ENCODE measurements at regions of chr1 and their contacts with region 1.

Region 1: GRCh38 chr1:167789501-167789900 is 67.7 kb downstream of the MPZL1 start:
- DNase-seq: no peak
- H3K4me3 ChIP-seq: no peak overlapping the region
- H3K27ac ChIP-seq: peak overlapping the region; percentile 51 to 79 (median 74)
- H3K4me1 ChIP-seq: peaks cover 20 to 38% (median 24%) of the 10 kb centered on the region in 3 donors
- H3K27me3 ChIP-seq: no peaks in the 10 kb centered on the region
- CTCF ChIP-seq: no peak
- POLR2A ChIP-seq: no peak

Region 2: DNA sequence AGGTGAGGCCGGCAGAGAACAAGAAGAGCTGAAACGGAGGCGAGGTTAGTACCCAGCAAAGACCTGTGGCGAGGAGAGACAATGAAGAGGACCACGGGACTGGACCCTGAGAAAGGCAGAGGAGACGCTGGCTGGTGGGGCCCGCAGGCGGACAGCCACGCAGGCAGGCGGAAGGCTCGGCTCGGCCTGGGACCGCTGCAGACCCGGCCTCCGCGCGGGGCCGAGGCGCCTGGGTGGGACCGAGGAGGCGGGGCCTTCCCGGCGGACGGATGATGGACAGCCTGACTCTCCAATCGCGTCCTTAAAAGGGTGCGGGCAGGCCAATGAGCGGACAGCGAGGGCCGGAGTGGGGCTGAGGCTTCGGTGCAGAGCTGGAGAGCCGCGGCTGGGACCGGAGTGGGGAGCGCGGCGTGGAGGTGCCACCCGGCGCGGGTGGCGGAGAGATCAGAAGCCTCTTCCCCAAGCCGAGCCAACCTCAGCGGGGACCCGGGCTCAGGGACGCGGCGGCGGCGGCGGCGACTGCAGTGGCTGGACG is 67.8 kb before region 1 on chr1 and contains the start of gene MPZL1:
- intact Hi-C with region 1: loop called (anchors 10 kb)
- DNase-seq: peak; percentile 53
- H3K4me3 ChIP-seq: peak within 1 kb of the TSS; percentile 73 to 92 (median 82)
- H3K27ac ChIP-seq: peak within 1 kb of the TSS; percentile 90 to 97 (median 92)
- H3K4me1 ChIP-seq: peaks cover 15 to 54% (median 20%) of the 10 kb centered on the region in 3 donors
- H3K27me3 ChIP-seq: no peaks in the 10 kb centered on the region
- CTCF ChIP-seq: no peak
- POLR2A ChIP-seq: peak in 2 of 4 donors; percentile 82 to 90
- total RNA-seq, gene MPZL1: 36.6 to 80.5 (median 74.3) TPM

Region 3: GRCh38 chr1:167763525-167764220 is 25.8 kb before region 1 on chr1:
- intact Hi-C with region 1: no loop called
- DNase-seq: no peak
- H3K4me3 ChIP-seq: no peak overlapping the region
- H3K27ac ChIP-seq: no peak overlapping the region
- H3K4me1 ChIP-seq: peaks cover 0 to 38% (median 10%) of the 10 kb centered on the region in 3 donors
- H3K27me3 ChIP-seq: no peaks in the 10 kb centered on the region
- CTCF ChIP-seq: no peak
- POLR2A ChIP-seq: no peak

Region 4: GRCh38 chr1:168136709-168137514 is 347.4 kb after region 1 on chr1 and contains the start of gene GPR161:
- intact Hi-C with region 1: no loop called
- DNase-seq: no peak
- H3K4me3 ChIP-seq: peak within 1 kb of the TSS; percentile 60 to 80 (median 72)
- H3K27ac ChIP-seq: peak within 1 kb of the TSS; percentile 71 to 90 (median 86)
- H3K4me1 ChIP-seq: peaks cover 12 to 38% (median 13%) of the 10 kb centered on the region in 3 donors
- H3K27me3 ChIP-seq: peaks cover 0 to 7% (median 0%) of the 10 kb centered on the region in 4 donors
- CTCF ChIP-seq: peak in 1 of 6 experiments; percentile 10
- POLR2A ChIP-seq: no peak
- total RNA-seq, gene GPR161: 1.7 to 12.2 (median 3.9) TPM

Region 5: DNA sequence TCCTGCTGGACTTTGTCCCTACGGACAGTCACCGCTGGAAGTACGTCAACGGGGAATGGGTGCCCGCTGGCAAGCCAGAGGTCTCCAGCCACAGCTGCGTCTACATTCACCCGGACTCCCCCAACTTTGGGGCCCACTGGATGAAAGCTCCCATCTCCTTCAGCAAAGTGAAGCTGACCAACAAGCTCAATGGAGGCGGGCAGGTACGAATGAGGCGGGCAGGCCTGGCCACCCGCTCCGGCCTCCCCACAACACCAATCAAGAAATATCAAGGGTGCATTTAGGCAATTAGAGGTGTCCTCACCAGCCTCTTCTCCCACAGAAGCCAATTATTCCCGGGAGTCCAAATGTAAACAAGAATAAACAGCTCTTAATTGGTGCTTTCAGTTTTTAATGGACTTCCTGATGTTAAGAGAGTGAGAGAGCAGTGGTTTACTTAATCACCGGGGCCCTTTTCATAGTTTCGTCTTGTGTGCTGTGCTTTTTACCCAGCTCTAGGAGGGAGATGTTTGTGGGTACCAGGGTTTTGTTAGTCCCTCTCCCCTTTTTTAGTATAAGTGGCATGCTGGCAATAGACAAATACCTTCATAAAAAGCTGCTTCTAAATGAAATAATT is 501.8 kb after region 1 on chr1:
- intact Hi-C with region 1: no loop called
- DNase-seq: no peak
- H3K4me3 ChIP-seq: no peak overlapping the region
- H3K27ac ChIP-seq: no peak overlapping the region
- H3K4me1 ChIP-seq: peaks cover 0 to 4% (median 0%) of the 10 kb centered on the region in 3 donors
- H3K27me3 ChIP-seq: no peaks in the 10 kb centered on the region
- CTCF ChIP-seq: no peak
- POLR2A ChIP-seq: no peak

Measured in esophagus squamous epithelium (tissue), 5 donors.